ENCODE measurements at regions of chr4 and their contacts with region 1.

Region 1: DNA sequence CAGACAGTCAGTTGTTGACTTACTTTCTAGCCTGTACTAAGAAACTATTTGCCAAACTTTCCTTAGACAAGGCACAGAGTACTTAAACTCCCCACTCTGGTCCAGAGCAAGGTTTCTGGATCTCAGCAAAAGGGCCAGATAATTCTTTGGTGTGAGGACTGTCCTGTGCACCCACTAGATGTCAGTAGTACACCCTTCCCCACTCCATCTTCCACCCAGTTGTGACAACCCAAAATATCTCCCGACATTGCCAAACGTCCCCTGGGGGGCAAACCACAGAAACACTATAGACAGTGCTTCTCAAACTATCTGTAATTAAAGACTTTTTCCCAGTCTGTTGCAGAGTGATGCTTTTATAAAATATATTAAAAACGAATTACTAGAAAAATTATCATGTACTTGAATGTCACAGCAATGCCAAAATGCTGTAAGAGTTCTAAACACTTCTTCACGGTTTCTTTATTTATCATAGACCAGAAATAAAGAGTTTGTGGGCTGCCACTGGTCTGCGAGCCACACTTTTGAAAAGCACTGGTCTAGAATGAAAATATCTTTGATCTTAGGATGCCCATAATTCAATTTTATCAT is 203.5 kb downstream of the PRDM5 start:
- DNase-seq: no peak
- ATAC-seq: peak; percentile 89

Region 2: DNA sequence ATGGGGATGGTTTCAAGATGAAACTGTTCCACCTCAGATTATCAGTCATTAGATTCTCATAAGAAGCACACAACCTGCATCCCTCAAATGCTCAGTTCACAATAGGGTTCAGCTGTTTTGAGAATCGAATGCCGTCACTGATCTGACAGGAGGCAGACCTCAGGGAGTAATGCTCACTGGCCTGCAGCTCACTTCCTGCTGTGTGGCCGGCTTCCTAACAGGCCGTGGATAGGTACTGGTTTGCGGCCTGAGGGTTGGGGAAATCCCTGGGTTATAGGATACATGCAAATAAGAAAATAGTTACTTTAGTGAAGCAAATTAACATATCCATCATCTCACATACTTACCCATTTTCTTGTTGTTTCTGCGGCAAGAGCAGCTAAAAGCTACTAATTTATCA is 812.8 kb before region 1 on chr4:
- intact Hi-C with region 1: no loop called
- DNase-seq: no peak
- ATAC-seq: no peak

Region 3: GRCh38 chr4:120922381-120923206 is 203.5 kb after region 1 on chr4 and contains the start of gene PRDM5:
- intact Hi-C with region 1: loop called (anchors 5 kb)
- DNase-seq: peak; percentile 78
- ATAC-seq: peak; percentile 82
- total RNA-seq, gene PRDM5: 8.0 TPM

Region 4: DNA sequence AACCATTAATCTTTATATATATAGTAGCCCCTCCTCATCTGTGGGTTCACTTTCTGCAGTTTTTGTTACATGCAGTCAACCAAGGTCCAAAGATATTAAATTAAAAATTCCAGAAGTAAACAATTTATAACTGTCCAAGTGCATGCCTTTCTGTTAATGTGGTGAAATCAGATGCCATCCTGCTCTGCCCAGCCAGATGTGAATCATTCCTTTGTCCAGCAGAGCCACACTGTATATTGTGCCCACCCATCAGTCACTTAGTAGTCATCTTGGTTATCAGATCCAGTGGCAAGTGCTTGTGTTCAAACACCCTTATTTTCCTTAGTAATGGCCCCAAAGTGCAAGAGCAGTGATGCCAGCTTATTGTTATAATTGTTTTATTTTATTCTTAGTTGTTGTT is 220.6 kb after region 1 on chr4:
- intact Hi-C with region 1: loop called (anchors 5 kb)
- DNase-seq: no peak
- ATAC-seq: no peak

Region 5: DNA sequence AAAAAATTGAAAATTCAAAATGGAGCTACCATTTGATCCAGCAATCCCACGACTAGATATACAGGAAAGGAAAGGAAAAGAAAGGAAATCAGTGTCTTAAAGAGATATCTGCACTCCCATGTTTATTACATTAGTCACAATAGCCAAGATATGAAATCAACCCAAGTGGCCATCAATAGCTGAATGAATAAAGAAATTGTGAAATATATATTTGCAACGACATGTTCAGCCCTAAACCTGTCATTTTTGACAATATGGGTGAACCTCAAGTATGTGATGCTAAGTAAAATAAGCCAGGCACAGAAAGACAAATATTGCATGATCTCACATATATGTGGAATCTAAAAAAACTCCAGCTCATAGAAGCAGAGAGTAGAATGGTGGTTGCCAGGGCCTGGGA is 822.6 kb after region 1 on chr4:
- intact Hi-C with region 1: no loop called
- DNase-seq: no peak
- ATAC-seq: no peak

Measured in Right ventricle myocardium superior (tissue), 1 donor.